Activated CD4-positive, alpha-beta T cell treated with anti-CD3 and anti-CD28 coated beads for 36 hours (primary cell): ENCODE measurements at regions of chr7 and their contacts with region 1.

Region 1: GRCh38 chr7:112970771-112971170 is 115.9 kb downstream of the GPR85 start:
- DNase-seq: no peak
- ATAC-seq: no peak
- H3K4me3 Mint-ChIP-seq: no peak overlapping the region
- H3K27ac Mint-ChIP-seq: no peak overlapping the region
- H3K4me1 Mint-ChIP-seq: no peaks in the 10 kb centered on the region
- H3K27me3 Mint-ChIP-seq: peaks cover 18% of the 10 kb centered on the region

Region 2: GRCh38 chr7:112989531-112989930 is 18.8 kb after region 1 on chr7:
- CTCF ChIA-PET with region 1: no interaction called
- POLR2A ChIA-PET with region 1: no interaction called
- intact Hi-C with region 1: loop called in 1 of 2 experiments (anchors 2 kb)
- DNase-seq: no peak
- ATAC-seq: no peak
- H3K4me3 Mint-ChIP-seq: no peak overlapping the region
- H3K27ac Mint-ChIP-seq: no peak overlapping the region
- H3K4me1 Mint-ChIP-seq: no peaks in the 10 kb centered on the region
- H3K27me3 Mint-ChIP-seq: peaks cover 25% of the 10 kb centered on the region

Region 3: DNA sequence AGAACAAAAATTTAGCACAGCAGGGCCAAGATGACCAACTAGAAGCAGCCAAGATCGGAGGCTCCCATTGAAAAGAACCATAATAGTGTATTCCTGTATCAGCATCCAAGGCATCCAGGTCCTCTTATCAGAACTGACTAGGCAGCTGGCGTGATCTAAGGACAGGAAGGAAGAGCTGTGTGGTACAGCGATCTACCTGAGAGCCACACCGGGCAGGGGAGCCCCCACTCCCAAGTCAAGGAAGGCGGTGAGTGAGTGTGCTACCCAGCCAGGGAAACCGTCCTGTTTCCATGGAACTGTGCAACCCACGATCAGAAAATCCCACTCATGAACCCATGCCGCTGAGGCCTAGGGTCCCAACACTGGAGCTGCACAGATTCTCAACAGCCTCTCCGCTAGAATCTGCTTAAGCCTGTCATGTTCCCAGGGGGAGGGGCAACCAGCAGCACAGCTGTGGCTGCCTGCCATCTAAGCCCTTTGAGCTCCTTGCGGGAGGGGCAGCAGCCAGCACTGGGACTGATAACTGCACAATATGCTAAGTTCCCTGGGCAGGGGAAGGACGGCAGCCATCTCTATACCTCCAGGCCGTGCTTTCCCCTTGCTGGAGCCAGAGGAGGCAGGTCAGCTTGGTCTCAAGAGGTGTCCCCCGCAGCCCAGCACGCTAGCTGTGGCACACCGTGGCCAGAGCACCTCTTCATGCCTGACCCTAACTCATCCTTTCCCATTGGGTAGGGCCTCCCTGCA is 360.6 kb after region 1 on chr7:
- CTCF ChIA-PET with region 1: no interaction called
- POLR2A ChIA-PET with region 1: no interaction called
- intact Hi-C with region 1: no loop called
- DNase-seq: no peak
- ATAC-seq: no peak
- H3K4me3 Mint-ChIP-seq: no peak overlapping the region
- H3K27ac Mint-ChIP-seq: no peak overlapping the region
- H3K4me1 Mint-ChIP-seq: no peaks in the 10 kb centered on the region
- H3K27me3 Mint-ChIP-seq: no peaks in the 10 kb centered on the region

Region 4: GRCh38 chr7:113487925-113488731 is 517.4 kb after region 1 on chr7:
- CTCF ChIA-PET with region 1: no interaction called
- POLR2A ChIA-PET with region 1: no interaction called
- intact Hi-C with region 1: loop called (anchors 5 kb)
- DNase-seq: no peak
- ATAC-seq: no peak
- H3K4me3 Mint-ChIP-seq: no peak overlapping the region
- H3K27ac Mint-ChIP-seq: no peak overlapping the region
- H3K4me1 Mint-ChIP-seq: no peaks in the 10 kb centered on the region
- H3K27me3 Mint-ChIP-seq: no peaks in the 10 kb centered on the region